ENCODE measurements at regions of chr17 and their contacts with region 1.

Region 1: DNA sequence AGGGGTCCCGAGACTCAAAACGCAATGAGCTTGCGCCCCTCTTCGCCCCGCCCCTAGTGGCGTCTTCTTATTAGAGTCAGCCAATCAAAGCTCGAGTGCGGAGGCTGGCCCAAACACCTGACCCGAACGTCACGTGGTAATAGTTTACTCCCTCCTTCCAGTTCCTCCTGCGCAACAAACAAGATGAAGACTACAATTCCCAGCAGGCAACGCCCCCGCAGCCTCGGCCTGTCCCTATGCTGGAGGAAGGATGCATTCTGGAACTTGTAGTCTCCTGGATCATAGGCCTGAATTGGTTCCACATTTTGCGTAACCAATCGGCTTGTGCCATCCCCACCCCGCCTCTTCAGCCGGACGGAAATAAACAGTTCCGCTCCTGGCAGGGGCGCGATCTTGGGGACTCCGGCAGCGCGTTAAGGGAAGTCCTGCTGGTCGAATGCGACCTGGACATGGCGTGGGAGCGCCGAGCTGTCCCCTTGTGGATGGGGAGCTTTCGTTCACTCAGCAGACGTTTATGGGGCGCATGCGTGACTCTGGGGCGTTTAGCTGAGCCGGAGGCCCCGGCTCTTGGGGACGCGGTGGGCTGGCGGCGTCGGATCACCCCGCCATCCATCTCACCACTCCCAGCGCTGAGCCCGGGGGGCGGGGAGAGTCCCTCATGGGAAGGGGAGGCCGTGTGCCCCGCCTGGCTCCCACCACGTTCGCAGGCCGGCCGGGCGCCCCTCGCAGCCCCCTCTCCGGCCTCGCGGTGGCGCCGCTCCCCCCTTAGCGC is at the start of gene WBP2:
- DNase-seq: peak; percentile 100
- H3K4me3 ChIP-seq: peak within 1 kb of the TSS; percentile 66 to 90 (median 84)
- H3K27ac ChIP-seq: peak within 1 kb of the TSS; percentile 81
- H3K4me1 ChIP-seq: peaks cover 26% of the 10 kb centered on the region
- H3K27me3 ChIP-seq: no peaks in the 10 kb centered on the region
- CTCF ChIP-seq: peak in 1 of 2 donors; percentile 37
- total RNA-seq, gene WBP2: 50.2 to 88.0 TPM

Region 2: GRCh38 chr17:75549221-75550138 is 306.0 kb before region 1 on chr17:
- CTCF ChIA-PET with region 1: no interaction called
- dilution Hi-C with region 1: no loop called
- in situ Hi-C with region 1: no loop called
- intact Hi-C with region 1: no loop called
- DNase-seq: peak; percentile 71
- H3K4me3 ChIP-seq: no peak overlapping the region
- H3K27ac ChIP-seq: peak overlapping the region; percentile 51
- H3K4me1 ChIP-seq: peaks cover 17% of the 10 kb centered on the region
- H3K27me3 ChIP-seq: no peaks in the 10 kb centered on the region
- CTCF ChIP-seq: no peak

Region 3: GRCh38 chr17:75749545-75750389 is 105.7 kb before region 1 on chr17:
- CTCF ChIA-PET with region 1: no interaction called
- dilution Hi-C with region 1: no loop called
- in situ Hi-C with region 1: no loop called
- intact Hi-C with region 1: no loop called
- DNase-seq: no peak
- H3K4me3 ChIP-seq: no peak overlapping the region
- H3K27ac ChIP-seq: no peak overlapping the region
- H3K4me1 ChIP-seq: peaks cover 3% of the 10 kb centered on the region
- H3K27me3 ChIP-seq: no peaks in the 10 kb centered on the region
- CTCF ChIP-seq: peak; percentile 52 to 77

Region 4: DNA sequence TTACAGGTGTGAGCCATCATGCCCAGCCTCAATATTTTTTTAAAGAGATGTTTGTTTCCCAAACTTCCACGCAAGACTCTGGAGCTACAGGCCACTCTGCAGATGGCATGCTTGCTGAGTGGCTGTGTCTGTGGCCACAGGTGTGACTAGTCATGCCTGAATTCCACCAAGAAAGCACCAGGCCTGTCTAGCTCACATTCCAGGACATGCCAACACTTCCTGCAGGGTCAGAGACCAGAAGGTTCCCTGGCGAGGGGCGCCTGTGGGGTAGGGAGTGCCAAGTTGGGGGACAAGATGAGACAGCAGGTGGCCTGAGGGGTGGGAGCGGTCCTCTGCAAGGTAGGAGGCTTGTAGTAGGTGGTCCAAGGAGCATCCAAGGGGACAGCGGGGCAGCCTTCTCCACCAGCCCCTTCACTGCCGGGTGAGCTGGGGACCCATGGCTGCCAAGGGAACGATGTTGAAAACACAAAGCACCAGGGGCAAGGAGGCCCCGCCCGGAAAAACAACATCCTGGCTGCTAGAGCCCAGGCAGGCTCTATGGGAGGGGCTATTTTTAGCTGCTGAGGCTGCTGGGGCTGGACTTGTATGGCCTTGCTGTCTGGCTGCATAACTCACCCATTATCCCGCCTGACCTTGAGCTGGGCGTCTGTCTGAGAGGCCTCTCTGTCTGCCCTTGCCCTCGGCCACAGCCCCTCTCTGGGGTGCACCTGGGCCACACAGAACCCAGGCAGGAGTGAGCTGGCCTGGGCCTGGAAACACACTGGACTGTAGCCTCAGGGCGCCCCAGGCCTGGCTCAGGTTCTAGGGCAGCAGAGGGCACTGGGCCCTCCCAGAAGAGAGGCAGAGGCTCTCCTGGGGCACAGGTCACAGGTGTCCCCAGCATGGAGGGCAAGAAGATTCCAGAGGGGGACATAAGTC is 17.2 kb after region 1 on chr17:
- CTCF ChIA-PET with region 1: interaction called, 16 read pairs
- dilution Hi-C with region 1: no loop called
- in situ Hi-C with region 1: no loop called
- intact Hi-C with region 1: loop called (anchors 1 kb)
- DNase-seq: peak; percentile 86
- H3K4me3 ChIP-seq: peak overlapping the region in 1 of 3 experiments; percentile 21
- H3K27ac ChIP-seq: peak overlapping the region; percentile 86
- H3K4me1 ChIP-seq: peaks cover 47% of the 10 kb centered on the region
- H3K27me3 ChIP-seq: no peaks in the 10 kb centered on the region
- CTCF ChIP-seq: no peak

Region 5: GRCh38 chr17:75877752-75878173 is 22.3 kb after region 1 on chr17:
- CTCF ChIA-PET with region 1: interaction called, 16 read pairs
- dilution Hi-C with region 1: no loop called
- in situ Hi-C with region 1: no loop called
- intact Hi-C with region 1: loop called (anchors 2 kb)
- DNase-seq: peak; percentile 76
- H3K4me3 ChIP-seq: peak overlapping the region; percentile 64 to 67 (median 65)
- H3K27ac ChIP-seq: peak overlapping the region; percentile 76
- H3K4me1 ChIP-seq: peaks cover 34% of the 10 kb centered on the region
- H3K27me3 ChIP-seq: no peaks in the 10 kb centered on the region
- CTCF ChIP-seq: peak; percentile 30 to 64

Region 6: DNA sequence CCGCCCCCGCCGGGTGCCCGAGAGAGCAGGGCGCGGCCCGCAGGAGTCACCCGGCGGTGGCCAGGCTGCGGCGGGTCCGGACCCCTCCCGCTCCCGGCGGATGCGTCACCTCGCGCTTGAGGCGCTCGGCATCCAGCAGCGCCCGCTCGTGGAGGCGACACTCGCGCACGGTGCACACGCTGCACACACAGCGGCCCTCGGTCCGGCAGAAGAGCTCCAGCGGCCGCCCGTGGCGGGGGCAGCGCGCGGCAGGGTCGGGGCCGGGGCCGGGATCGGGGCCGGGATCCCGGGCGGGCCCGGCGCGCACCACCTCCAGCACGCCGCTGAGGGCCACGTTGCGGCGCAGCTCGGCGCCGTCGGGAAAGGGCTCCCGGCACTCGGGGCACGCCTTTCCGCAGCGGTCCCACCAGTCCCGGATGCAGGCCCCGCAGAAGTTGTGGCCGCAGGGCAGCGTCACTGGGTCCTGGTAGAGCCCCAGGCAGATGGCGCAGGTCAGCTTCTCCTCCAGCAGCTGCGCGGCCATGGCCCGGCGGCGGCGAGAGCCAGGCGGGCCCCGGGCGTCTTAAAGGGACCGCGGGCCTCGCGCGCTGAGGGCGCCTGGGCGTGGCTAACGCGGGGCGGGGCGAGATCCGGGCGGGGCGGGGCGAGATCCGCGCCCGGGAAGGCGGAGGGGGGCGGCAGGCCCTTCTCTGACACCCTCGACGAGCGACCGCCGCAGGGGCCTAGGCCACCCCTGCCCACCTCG is 41.1 kb after region 1 on chr17 and contains the start of gene TRIM65:
- CTCF ChIA-PET with region 1: no interaction called
- dilution Hi-C with region 1: no loop called
- in situ Hi-C with region 1: no loop called
- intact Hi-C with region 1: loop called (anchors 1 kb)
- DNase-seq: peak; percentile 75
- H3K4me3 ChIP-seq: peak within 1 kb of the TSS; percentile 51 to 84 (median 77)
- H3K27ac ChIP-seq: peak within 1 kb of the TSS; percentile 40
- H3K4me1 ChIP-seq: peaks cover 8% of the 10 kb centered on the region
- H3K27me3 ChIP-seq: no peaks in the 10 kb centered on the region
- CTCF ChIP-seq: peak; percentile 9 to 53
- total RNA-seq, gene TRIM65: 19.3 to 20.2 TPM

Region 7: GRCh38 chr17:76005263-76006149 is 150.0 kb after region 1 on chr17:
- CTCF ChIA-PET with region 1: no interaction called
- dilution Hi-C with region 1: no loop called
- in situ Hi-C with region 1: no loop called
- intact Hi-C with region 1: loop called (anchors 5 kb)
- DNase-seq: peak; percentile 62
- H3K4me3 ChIP-seq: no peak overlapping the region
- H3K27ac ChIP-seq: no peak overlapping the region
- H3K4me1 ChIP-seq: no peaks in the 10 kb centered on the region
- H3K27me3 ChIP-seq: no peaks in the 10 kb centered on the region
- CTCF ChIP-seq: peak; percentile 45 to 76